ENCODE measurements at regions of chr1 and their contacts with region 1.

Region 1: GRCh38 chr1:21586846-21587601 is 77.8 kb downstream of the ALPL start:
- DNase-seq: peak; percentile 91
- ATAC-seq: peak; percentile 92
- H3K4me3 ChIP-seq: no peak overlapping the region
- H3K27ac ChIP-seq: no peak overlapping the region; the same call in 1 of the 2 replicates
- H3K4me1 ChIP-seq: peaks cover 7% of the 10 kb centered on the region
- H3K27me3 ChIP-seq: peaks cover 16% of the 10 kb centered on the region; the same call in 1 of the 2 replicates
- CTCF ChIP-seq: no peak; the same call in 1 of the 2 replicates
- POLR2A ChIP-seq: 0 out of 2 replicates have a peak, but pooled peaks have one; percentile 22
- RAD21 ChIP-seq: peak; percentile 28; the same call in 1 of the 2 replicates

Region 2: GRCh38 chr1:21406659-21407058 is 180.4 kb before region 1 on chr1:
- CTCF ChIA-PET with region 1: no interaction called
- POLR2A ChIA-PET with region 1: no interaction called
- dilution Hi-C with region 1: no loop called
- in situ Hi-C with region 1: no loop called
- intact Hi-C with region 1: no loop called
- DNase-seq: no peak
- ATAC-seq: no peak
- H3K4me3 ChIP-seq: no peak overlapping the region
- H3K27ac ChIP-seq: no peak overlapping the region
- H3K4me1 ChIP-seq: no peaks in the 10 kb centered on the region
- H3K27me3 ChIP-seq: peaks cover 23% of the 10 kb centered on the region
- CTCF ChIP-seq: no peak
- POLR2A ChIP-seq: no peak
- RAD21 ChIP-seq: no peak

Region 3: DNA sequence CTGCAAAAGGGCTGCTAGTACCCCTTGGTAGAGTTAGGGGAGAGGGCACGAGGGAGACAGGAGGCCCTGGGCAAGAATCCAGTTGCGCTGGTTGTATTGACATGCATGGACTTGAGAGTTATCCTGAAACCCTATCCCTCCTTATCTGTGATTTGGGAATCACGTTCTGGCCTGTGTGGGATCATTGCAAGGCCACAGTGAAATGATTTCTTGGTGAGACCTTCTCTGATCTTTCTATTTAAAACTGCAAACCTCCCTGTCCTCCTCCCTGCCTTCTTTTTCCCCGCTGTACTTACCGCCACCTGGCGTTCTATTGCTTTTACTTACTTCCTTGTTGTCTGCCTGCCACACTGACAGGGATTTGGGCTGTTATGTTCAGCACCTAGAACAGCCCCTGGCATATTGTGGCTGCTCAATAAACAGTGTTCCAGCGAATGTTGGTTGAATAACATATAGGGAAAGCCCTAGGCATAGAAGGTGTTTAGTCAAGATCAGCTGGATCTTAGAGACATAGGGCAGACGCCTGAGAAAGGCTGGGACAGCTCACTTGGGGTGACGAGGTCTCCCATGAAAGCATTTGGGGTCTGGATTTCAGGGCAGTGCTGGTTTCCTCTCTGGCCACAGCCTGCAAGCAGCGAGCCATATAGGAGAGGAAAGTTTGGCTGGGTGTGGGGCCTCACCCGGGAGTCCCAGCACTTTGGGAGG is 52.2 kb before region 1 on chr1:
- CTCF ChIA-PET with region 1: interaction called, 3 read pairs
- POLR2A ChIA-PET with region 1: no interaction called
- dilution Hi-C with region 1: no loop called
- in situ Hi-C with region 1: no loop called
- intact Hi-C with region 1: loop called (anchors 5 kb)
- DNase-seq: peak; percentile 77
- ATAC-seq: peak; percentile 91
- H3K4me3 ChIP-seq: no peak overlapping the region
- H3K27ac ChIP-seq: no peak overlapping the region
- H3K4me1 ChIP-seq: peaks cover 2% of the 10 kb centered on the region; the same call in 1 of the 2 replicates
- H3K27me3 ChIP-seq: peaks cover 24% of the 10 kb centered on the region
- CTCF ChIP-seq: peak; percentile 74
- POLR2A ChIP-seq: no peak
- RAD21 ChIP-seq: peak; percentile 75

Region 4: GRCh38 chr1:21573971-21574465 is 13.0 kb before region 1 on chr1:
- CTCF ChIA-PET with region 1: no interaction called
- POLR2A ChIA-PET with region 1: no interaction called
- dilution Hi-C with region 1: no loop called
- in situ Hi-C with region 1: no loop called
- intact Hi-C with region 1: no loop called
- DNase-seq: peak; percentile 75
- ATAC-seq: peak; percentile 89
- H3K4me3 ChIP-seq: no peak overlapping the region
- H3K27ac ChIP-seq: no peak overlapping the region
- H3K4me1 ChIP-seq: no peaks in the 10 kb centered on the region
- H3K27me3 ChIP-seq: no peaks in the 10 kb centered on the region; the same call in 1 of the 2 replicates
- CTCF ChIP-seq: peak; percentile 76
- POLR2A ChIP-seq: no peak
- RAD21 ChIP-seq: peak; percentile 83